ENCODE measurements at regions of chr20 and their contacts with region 1.

Region 1: DNA sequence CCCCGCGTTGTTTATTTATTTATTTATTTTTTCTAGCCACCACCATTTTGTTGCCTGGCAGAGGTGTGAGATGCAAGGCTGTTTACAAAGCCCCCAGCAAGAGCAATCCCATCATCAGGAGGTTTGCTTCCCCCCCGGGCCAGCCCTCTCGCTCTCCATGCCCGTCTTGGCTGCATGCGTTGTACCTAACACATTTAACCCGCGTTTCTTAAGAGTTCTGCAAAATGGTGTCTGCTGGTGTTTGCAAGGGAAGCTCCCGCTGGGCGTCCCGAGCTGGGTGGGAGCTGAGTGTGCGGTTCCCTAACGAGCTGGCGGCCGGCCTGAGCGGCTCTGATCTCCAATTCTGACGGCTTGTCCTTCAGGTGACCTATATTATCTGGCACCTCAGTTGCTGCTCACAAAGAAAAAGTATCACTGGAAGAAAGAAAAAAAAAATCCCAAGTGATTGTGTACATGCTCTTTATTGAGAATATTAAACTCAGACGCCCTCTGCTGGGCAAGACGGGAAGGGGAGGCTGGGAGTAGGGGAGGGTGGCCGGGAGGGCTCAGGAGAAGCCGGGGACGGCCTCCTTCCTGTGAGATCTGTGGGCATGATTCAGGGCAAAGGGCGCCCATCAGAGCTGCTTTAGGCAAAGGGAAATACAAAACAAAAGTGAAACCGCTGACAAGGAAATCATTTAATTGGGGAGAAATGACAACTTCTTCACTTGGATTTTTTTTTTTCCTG is 154.8 kb downstream of the BCAS1 start:
- DNase-seq: peak; percentile 91
- ATAC-seq: peak; percentile 94
- H3K4me3 ChIP-seq: peak overlapping the region; percentile 69 to 83 (median 74)
- H3K4me3 Mint-ChIP-seq: peak overlapping the region; percentile 94
- H3K27ac ChIP-seq: peak overlapping the region; percentile 45 to 68
- H3K27ac Mint-ChIP-seq: peak overlapping the region; percentile 90
- H3K4me1 ChIP-seq: peaks cover 17 to 38% of the 10 kb centered on the region in 2 donors
- H3K4me1 Mint-ChIP-seq: peaks cover 40% of the 10 kb centered on the region
- H3K27me3 ChIP-seq: no peaks in the 10 kb centered on the region
- H3K27me3 Mint-ChIP-seq: no peaks in the 10 kb centered on the region
- CTCF ChIP-seq: peak; percentile 86

Region 2: GRCh38 chr20:53594068-53595017 is 321.3 kb before region 1 on chr20:
- CTCF ChIA-PET with region 1: interaction called, 21 read pairs
- POLR2A ChIA-PET with region 1: interaction called, 20 read pairs
- intact Hi-C with region 1: no loop called
- DNase-seq: peak; percentile 95
- ATAC-seq: peak; percentile 70
- H3K4me3 ChIP-seq: peak overlapping the region; percentile 52 to 91 (median 85)
- H3K4me3 Mint-ChIP-seq: peak overlapping the region; percentile 92
- H3K27ac ChIP-seq: peak overlapping the region; percentile 92 to 96
- H3K27ac Mint-ChIP-seq: peak overlapping the region; percentile 96
- H3K4me1 ChIP-seq: peaks cover 26 to 27% of the 10 kb centered on the region in 2 donors
- H3K4me1 Mint-ChIP-seq: peaks cover 52% of the 10 kb centered on the region
- H3K27me3 ChIP-seq: no peaks in the 10 kb centered on the region
- H3K27me3 Mint-ChIP-seq: no peaks in the 10 kb centered on the region
- CTCF ChIP-seq: peak; percentile 14

Region 3: DNA sequence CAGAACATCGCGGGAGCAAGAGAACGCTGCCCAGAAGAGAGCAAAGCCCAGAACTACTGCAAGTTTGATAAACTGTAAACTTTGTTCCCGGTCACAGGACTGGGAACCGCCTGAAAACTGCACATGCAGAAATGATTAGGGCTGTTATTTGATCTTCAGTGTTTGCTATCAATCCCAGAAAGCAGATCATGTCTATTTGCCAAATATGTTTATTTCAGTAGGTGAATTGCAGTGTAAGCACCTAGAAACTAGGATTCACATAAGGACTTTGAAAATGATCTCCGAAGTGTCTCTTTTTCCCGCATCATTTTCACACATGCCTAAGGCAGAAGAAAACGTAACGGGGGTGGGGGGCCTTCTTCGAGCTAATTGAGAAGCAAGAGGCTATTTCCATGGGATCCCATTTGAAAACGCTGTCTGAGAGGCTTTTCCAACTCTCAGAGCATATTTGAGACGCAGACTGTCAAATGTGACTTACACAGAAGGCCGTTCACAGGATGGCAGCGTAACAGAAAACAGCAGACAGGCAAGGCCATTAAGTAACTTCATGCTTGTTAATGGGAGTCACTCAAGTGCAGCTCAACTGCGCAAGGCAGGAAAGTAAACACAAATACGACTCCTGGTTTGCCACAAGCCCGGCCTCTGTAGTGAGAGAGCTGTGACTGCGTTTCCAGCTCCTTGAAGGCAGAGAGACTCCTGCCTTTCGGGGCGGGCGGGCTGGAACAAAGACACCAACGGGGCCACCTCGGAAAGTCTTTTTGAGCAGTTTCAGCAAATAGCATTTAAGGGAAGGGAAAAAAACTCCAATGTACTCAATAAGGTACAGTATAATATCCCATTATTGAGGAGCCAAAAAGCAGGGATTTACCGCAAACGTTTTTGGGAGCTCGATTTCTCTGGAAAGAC is 177.3 kb before region 1 on chr20:
- CTCF ChIA-PET with region 1: interaction called, 7 read pairs
- POLR2A ChIA-PET with region 1: no interaction called
- intact Hi-C with region 1: loop called (anchors 5 kb)
- DNase-seq: peak; percentile 41
- ATAC-seq: no peak
- H3K4me3 ChIP-seq: no peak overlapping the region
- H3K4me3 Mint-ChIP-seq: peak overlapping the region; percentile 10
- H3K27ac ChIP-seq: peak overlapping the region; percentile 77 to 79
- H3K27ac Mint-ChIP-seq: peak overlapping the region; percentile 83
- H3K4me1 ChIP-seq: peaks cover 64 to 65% of the 10 kb centered on the region in 2 donors
- H3K4me1 Mint-ChIP-seq: peaks cover 71% of the 10 kb centered on the region
- H3K27me3 ChIP-seq: no peaks in the 10 kb centered on the region
- H3K27me3 Mint-ChIP-seq: no peaks in the 10 kb centered on the region
- CTCF ChIP-seq: no peak

Region 4: DNA sequence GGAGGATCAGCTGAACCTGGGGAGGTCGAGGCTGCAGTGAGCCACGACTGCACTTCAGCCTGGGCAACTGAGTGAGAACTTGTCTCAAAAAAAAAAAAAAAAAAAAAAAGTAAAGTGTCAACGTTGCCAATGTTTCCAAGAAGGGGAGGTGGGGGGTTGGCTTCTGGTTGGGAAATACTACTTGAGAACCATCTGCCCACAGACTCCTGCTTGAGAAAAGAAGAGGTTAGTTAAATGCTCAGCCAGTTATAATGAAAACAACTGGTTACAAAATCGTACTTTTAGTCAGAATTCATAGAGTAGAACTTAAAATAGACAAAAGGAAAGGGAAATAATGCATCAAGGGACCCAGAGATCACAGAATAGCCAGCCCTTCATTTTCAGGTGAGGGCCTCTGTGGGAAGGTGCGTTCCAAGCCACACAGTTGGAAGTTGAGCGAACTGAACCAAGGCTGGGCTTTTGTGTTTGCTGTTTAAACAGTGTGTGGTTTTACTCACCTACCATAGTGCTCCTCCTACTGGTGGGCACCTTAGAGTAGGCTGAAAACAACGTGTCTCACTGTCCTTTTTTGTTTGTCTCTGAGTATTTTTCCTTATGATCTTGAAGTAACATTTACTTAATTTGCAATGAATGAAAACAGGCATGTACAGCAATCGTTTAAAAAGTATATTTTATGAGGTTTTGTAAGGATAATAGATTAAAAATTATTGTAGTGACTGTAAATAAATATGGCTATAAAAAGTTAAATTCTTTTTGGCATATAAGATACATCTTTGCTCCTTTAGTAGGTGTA is 45.9 kb before region 1 on chr20:
- CTCF ChIA-PET with region 1: interaction called, 43 read pairs
- POLR2A ChIA-PET with region 1: no interaction called
- intact Hi-C with region 1: loop called (anchors 1 kb)
- DNase-seq: peak; percentile 82
- ATAC-seq: peak; percentile 76
- H3K4me3 ChIP-seq: peak overlapping the region in 2 of 5 experiments; percentile 35 to 54
- H3K4me3 Mint-ChIP-seq: peak overlapping the region; percentile 40
- H3K27ac ChIP-seq: peak overlapping the region; percentile 65 to 79
- H3K27ac Mint-ChIP-seq: peak overlapping the region; percentile 72
- H3K4me1 ChIP-seq: peaks cover 69% of the 10 kb centered on the region in 2 donors
- H3K4me1 Mint-ChIP-seq: peaks cover 64% of the 10 kb centered on the region
- H3K27me3 ChIP-seq: no peaks in the 10 kb centered on the region
- H3K27me3 Mint-ChIP-seq: no peaks in the 10 kb centered on the region
- CTCF ChIP-seq: peak; percentile 89

Region 5: GRCh38 chr20:53899351-53900167 is 16.1 kb before region 1 on chr20:
- CTCF ChIA-PET with region 1: interaction called, 37 read pairs
- POLR2A ChIA-PET with region 1: interaction called, 7 read pairs
- intact Hi-C with region 1: loop called (anchors 2 kb)
- DNase-seq: peak; percentile 44
- ATAC-seq: peak; percentile 78
- H3K4me3 ChIP-seq: no peak overlapping the region
- H3K4me3 Mint-ChIP-seq: no peak overlapping the region
- H3K27ac ChIP-seq: peak overlapping the region; percentile 15 to 33
- H3K27ac Mint-ChIP-seq: peak overlapping the region; percentile 77
- H3K4me1 ChIP-seq: peaks cover 16 to 27% of the 10 kb centered on the region in 2 donors
- H3K4me1 Mint-ChIP-seq: peaks cover 43% of the 10 kb centered on the region
- H3K27me3 ChIP-seq: no peaks in the 10 kb centered on the region
- H3K27me3 Mint-ChIP-seq: no peaks in the 10 kb centered on the region
- CTCF ChIP-seq: no peak